Colonic mucosa (tissue), 4 donors: ENCODE measurements at regions of chr5 and their contacts with region 1.

Region 1: DNA sequence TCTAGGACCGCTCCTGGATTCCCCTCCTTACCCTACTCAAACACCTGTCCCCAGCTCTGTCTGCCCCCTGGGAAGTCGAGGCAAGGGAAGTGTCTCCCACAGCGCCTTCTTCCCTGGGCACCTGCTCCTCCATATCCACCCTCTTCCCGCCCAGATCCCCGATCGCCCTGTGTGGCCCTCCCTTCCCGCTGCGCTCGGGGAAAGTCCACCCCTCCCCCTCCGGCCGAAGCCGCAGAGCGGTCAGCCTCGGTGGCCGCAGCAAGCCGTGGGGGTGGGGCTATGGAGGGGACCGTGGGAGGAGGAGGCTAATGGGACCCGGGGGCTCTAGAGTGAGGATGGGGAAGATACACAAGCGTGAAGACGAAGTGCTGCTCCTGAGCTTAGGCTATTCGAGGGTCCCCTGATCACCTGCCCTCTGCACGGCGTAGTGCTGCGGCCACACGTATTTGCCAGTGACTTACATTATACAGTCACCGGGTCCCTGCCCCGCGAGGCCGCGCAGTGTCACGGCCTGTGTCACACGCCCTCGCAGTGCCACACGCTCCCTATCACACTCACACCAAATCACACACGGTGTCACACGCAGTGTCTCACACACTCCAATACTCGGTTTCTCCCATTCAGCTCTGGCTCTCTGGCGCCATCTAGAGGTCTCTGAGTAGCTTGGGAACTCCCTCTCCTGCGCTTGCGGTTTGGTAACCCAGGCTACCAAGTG is 658 bp upstream of the PCDH1 start:
- DNase-seq: peak; percentile 98
- H3K4me3 ChIP-seq: peak overlapping the region; percentile 73
- H3K27ac ChIP-seq: peak overlapping the region; percentile 94
- H3K4me1 ChIP-seq: no peaks in the 10 kb centered on the region
- H3K27me3 ChIP-seq: peaks cover 25% of the 10 kb centered on the region
- CTCF ChIP-seq: peak; percentile 97

Region 2: GRCh38 chr5:141701360-141702119 is 177.3 kb before region 1 on chr5:
- intact Hi-C with region 1: loop called (anchors 2 kb)
- DNase-seq: no peak
- H3K4me3 ChIP-seq: peak overlapping the region; percentile 51
- H3K27ac ChIP-seq: no peak overlapping the region
- H3K4me1 ChIP-seq: peaks cover 7% of the 10 kb centered on the region
- H3K27me3 ChIP-seq: no peaks in the 10 kb centered on the region
- CTCF ChIP-seq: no peak

Region 3: GRCh38 chr5:141757402-141757801 is 121.5 kb before region 1 on chr5:
- intact Hi-C with region 1: loop called (anchors 5 kb)
- DNase-seq: peak; percentile 37
- H3K4me3 ChIP-seq: no peak overlapping the region
- H3K27ac ChIP-seq: no peak overlapping the region
- H3K4me1 ChIP-seq: no peaks in the 10 kb centered on the region
- H3K27me3 ChIP-seq: peaks cover 9% of the 10 kb centered on the region
- CTCF ChIP-seq: peak; percentile 9

Region 4: GRCh38 chr5:141843162-141843927 is 35.5 kb before region 1 on chr5:
- intact Hi-C with region 1: loop called (anchors 5 kb)
- DNase-seq: no peak
- H3K4me3 ChIP-seq: no peak overlapping the region
- H3K27ac ChIP-seq: no peak overlapping the region
- H3K4me1 ChIP-seq: peaks cover 13% of the 10 kb centered on the region
- H3K27me3 ChIP-seq: no peaks in the 10 kb centered on the region
- CTCF ChIP-seq: no peak